SK-N-SH (cell line): ENCODE measurements at regions of chr5 and their contacts with region 1.

Region 1: DNA sequence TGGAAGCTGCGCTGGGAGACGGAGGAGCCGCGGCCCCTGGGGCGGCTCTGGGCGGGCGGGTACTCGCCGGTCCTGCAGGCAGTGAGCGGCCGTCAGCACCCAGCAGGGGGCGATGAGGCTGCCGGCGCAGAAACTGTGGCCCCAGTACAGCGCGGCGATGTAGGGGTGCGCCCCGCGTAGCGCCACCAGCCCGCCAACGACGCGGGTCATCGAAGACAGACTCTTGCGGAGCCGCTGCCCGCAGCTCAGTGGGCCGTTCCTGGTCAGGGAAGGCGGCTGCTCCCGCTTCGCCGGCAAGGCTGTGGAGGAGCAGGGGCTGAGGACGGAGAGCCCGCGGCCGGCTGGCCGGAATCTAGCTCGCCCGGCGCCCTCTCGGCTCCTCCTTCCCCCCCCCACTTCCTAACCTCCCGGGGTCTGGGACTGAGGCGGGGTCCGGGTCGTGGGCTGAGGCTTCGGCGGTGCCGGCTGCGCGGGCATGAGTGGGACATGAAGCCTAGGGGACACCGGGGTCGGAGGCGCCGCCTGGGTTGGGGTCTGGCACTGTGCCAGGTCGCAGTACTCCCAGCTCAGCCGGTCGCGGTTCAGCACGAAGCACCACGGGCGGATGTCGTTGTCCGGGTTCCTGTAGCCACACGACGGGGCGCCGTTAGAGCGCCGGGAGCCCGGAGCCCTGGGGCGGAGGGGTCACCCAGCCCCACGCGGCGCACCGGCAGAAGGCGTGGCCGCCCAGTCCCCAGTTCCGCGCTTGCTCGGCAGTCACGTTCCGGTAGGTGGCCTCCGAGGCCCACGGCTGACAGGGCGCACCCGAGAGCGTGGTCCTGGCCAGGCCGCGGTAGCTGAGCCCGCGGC is 3.6 kb upstream of the PFN3 start:
- DNase-seq: peak; percentile 94
- H3K4me3 ChIP-seq: peak overlapping the region; percentile 60 to 83
- H3K27ac ChIP-seq: peak overlapping the region in 1 of 2 experiments; percentile 96; a peak in 2 of 4 replicates
- H3K4me1 ChIP-seq: peaks cover 0 to 28% of the 10 kb centered on the region in 2 experiments; a peak in 1 of 4 replicates
- H3K27me3 ChIP-seq: no peaks in the 10 kb centered on the region
- CTCF ChIP-seq: peak; percentile 72
- EP300 ChIP-seq: no peak; a peak in 1 of 4 replicates
- RAD21 ChIP-seq: peak; percentile 81

Region 2: DNA sequence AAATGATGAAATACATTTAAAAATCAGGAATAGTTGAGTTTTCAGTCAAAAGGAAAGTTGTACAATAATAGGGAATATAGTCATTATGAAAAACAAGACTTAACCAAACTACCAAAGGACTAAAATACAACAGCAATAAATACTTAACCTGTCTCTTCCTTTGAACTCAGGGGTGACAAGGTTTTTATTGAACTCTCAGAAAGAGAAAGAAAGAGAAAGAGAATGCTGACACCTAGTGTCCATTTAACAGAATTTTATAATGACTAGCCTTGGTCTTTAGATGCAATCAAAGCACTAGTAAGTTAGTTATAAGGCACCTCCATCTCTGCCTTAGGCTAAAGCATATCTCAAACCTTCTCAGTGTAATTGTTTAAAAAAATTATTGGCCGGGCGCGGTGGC is 445.0 kb before region 1 on chr5:
- CTCF ChIA-PET with region 1: no interaction called
- POLR2A ChIA-PET with region 1: no interaction called
- DNase-seq: peak; percentile 54
- H3K4me3 ChIP-seq: no peak overlapping the region; a peak in 1 of 4 replicates
- H3K27ac ChIP-seq: no peak overlapping the region
- H3K4me1 ChIP-seq: peaks cover 7 to 8% of the 10 kb centered on the region in 2 experiments; a peak in 3 of 4 replicates
- H3K27me3 ChIP-seq: no peaks in the 10 kb centered on the region
- CTCF ChIP-seq: peak; percentile 64
- EP300 ChIP-seq: no peak
- RAD21 ChIP-seq: peak; percentile 80

Region 3: DNA sequence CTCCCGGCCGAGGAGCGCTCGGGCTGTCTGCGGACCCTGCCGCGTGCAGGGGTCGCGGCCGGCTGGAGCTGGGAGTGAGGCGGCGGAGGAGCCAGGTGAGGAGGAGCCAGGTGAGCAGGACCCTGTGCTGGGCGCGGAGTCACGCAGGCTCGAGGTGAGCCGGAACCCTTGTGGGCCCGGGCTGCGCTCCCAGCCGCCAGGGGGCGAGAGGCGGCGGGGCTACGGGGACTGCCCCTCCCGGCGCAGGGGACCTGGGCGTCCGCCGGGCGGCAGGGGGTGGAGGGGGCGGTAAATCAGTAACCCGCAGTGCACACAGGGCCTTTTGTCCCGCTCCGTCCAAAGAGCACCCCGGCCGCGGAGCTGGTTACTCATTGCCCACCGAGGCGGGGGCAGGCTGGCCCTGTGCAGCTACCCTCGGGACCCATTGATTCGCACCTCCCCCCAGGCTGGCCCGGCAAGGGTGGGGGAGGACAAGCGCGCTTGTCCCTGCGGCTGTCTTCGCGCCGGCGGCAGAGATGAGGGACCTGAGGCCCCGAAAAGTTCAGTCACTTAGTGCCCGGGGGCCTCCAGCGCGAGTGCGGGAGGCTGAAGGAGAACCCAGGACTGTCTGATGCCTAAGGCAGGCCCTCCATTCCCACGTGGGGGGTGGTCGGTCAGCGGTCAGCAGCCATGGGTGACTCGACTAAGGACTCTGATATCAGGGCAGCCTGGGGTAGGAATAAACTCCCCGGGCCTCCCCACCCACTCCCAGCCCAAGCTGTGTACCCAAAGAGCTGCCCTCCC is 316.9 kb before region 1 on chr5:
- CTCF ChIA-PET with region 1: no interaction called
- POLR2A ChIA-PET with region 1: no interaction called
- DNase-seq: peak; percentile 88
- H3K4me3 ChIP-seq: peak overlapping the region; percentile 39 to 47; a peak in 3 of 4 replicates
- H3K27ac ChIP-seq: no peak overlapping the region
- H3K4me1 ChIP-seq: peaks cover 0 to 9% of the 10 kb centered on the region in 2 experiments; a peak in 1 of 4 replicates
- H3K27me3 ChIP-seq: no peaks in the 10 kb centered on the region
- CTCF ChIP-seq: peak; percentile 58
- EP300 ChIP-seq: no peak
- RAD21 ChIP-seq: no peak

Region 4: GRCh38 chr5:177317959-177318377 is 86.0 kb before region 1 on chr5:
- CTCF ChIA-PET with region 1: interaction called, 18 read pairs
- POLR2A ChIA-PET with region 1: no interaction called
- DNase-seq: peak; percentile 73
- H3K4me3 ChIP-seq: peak overlapping the region in 1 of 2 experiments; percentile 24; a peak in 1 of 4 replicates
- H3K27ac ChIP-seq: no peak overlapping the region
- H3K4me1 ChIP-seq: peaks cover 0 to under 1% of the 10 kb centered on the region in 2 experiments; a peak in 1 of 4 replicates
- H3K27me3 ChIP-seq: no peaks in the 10 kb centered on the region
- CTCF ChIP-seq: peak; percentile 88
- EP300 ChIP-seq: no peak
- RAD21 ChIP-seq: peak; percentile 78

Region 5: GRCh38 chr5:177382423-177383029 is 21.5 kb before region 1 on chr5:
- CTCF ChIA-PET with region 1: interaction called, 209 read pairs
- POLR2A ChIA-PET with region 1: no interaction called
- DNase-seq: peak; percentile 56
- H3K4me3 ChIP-seq: no peak overlapping the region
- H3K27ac ChIP-seq: no peak overlapping the region
- H3K4me1 ChIP-seq: peaks cover 0 to 7% of the 10 kb centered on the region in 2 experiments; a peak in 2 of 4 replicates
- H3K27me3 ChIP-seq: no peaks in the 10 kb centered on the region
- CTCF ChIP-seq: peak; percentile 27
- EP300 ChIP-seq: no peak
- RAD21 ChIP-seq: peak; percentile 38

Region 6: GRCh38 chr5:177431317-177432142 is 27.5 kb after region 1 on chr5:
- CTCF ChIA-PET with region 1: interaction called, 120 read pairs
- POLR2A ChIA-PET with region 1: interaction called, 11 read pairs
- DNase-seq: no peak
- H3K4me3 ChIP-seq: no peak overlapping the region
- H3K27ac ChIP-seq: no peak overlapping the region; a peak in 1 of 4 replicates
- H3K4me1 ChIP-seq: peaks cover 0 to 26% of the 10 kb centered on the region in 2 experiments; a peak in 1 of 4 replicates
- H3K27me3 ChIP-seq: no peaks in the 10 kb centered on the region
- CTCF ChIP-seq: no peak
- EP300 ChIP-seq: no peak
- RAD21 ChIP-seq: no peak

Region 7: DNA sequence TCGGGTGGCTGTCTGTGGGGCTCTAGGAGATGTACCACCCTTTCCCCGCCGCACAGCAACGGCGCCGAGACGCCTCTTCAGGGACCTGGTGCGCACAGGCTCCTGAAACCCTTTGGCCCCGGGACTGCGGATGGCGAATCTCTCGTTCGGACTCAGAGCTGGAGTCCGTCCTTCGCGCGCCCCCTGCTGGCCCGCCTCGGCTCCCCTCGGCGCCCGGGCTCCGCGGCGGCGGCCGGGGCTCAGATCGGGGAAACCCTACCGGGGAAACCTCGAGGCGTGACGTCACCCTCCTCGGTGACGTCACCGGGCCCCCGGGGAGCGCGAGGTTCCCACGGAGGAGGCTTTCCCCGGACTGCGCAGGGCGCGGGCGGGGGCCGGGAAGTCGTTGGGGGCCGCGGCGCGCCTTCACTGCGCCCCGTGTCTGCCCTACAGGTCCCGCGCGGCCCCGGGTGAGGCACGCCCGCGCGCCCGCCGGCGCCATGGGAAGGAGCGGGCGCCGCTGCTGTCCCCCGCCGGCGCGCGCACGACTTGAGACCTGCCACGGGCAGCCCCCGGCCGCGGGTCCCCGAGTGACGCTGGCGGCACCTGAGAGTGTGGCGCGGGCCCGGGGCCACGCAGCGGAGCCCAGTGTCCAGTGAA is 50.5 kb after region 1 on chr5:
- CTCF ChIA-PET with region 1: interaction called, 375 read pairs
- POLR2A ChIA-PET with region 1: interaction called, 72 read pairs
- DNase-seq: peak; percentile 95
- H3K4me3 ChIP-seq: peak overlapping the region; percentile 47 to 48
- H3K27ac ChIP-seq: peak overlapping the region; percentile 61 to 91
- H3K4me1 ChIP-seq: peaks cover 13 to 85% of the 10 kb centered on the region in 2 experiments
- H3K27me3 ChIP-seq: no peaks in the 10 kb centered on the region
- CTCF ChIP-seq: peak; percentile 77
- EP300 ChIP-seq: no peak
- RAD21 ChIP-seq: peak; percentile 86

Region 8: DNA sequence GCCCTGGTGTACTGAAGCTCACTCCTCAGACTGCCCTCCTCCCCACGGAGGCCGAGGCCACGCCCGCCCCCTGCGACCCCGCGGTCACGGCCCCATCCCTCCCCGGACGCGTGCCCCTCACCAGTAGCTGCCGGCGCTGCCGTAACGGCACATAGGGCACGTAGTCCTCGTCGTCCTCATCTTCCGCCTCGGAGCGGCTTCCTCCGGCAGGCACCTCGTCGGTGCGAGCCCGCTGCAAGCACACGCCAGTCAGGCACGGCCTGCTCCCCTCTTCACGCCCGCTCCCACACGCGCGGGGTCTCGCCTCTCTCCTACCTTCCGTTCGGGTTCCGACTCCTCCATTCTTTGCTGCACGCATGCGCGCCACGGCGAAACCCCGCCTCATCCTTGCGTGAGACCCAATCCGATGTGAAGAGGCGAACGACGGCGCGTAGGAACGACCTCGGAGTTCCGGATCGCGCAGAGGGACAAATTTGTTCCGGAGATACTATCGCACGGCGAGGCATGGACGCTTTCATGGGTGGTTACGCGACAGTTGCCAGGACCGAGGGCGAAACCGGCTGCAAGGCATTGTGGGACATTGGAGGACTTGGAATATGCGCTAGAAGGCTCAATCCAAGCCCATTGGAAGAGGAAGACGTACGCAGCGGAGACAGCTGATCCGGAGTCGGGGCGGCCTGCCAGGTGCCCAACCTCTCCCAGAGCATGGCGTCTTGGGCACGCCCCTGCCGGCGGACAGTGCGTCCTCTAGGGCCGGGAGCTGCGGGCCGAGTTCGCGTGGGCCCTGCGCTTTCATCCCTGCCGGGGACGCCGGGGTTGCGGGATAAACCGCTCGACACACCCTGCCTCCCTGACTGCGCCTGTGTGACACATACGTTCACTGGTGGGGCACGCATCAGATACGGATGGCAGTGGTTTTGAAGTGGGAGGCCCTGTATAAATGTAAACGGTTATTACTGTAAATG is 112.9 kb after region 1 on chr5 and contains the start of gene DDX41:
- CTCF ChIA-PET with region 1: interaction called, 11 read pairs
- POLR2A ChIA-PET with region 1: no interaction called
- DNase-seq: peak; percentile 98
- H3K4me3 ChIP-seq: peak within 1 kb of the TSS; percentile 79 to 99
- H3K27ac ChIP-seq: peak within 1 kb of the TSS; percentile 72 to 91
- H3K4me1 ChIP-seq: peaks cover 6 to 15% of the 10 kb centered on the region in 2 experiments; a peak in 2 of 4 replicates
- H3K27me3 ChIP-seq: no peaks in the 10 kb centered on the region
- CTCF ChIP-seq: 0 out of 2 replicates have a peak, but pooled peaks have one; percentile 20
- EP300 ChIP-seq: no peak; a peak in 2 of 4 replicates
- RAD21 ChIP-seq: no peak
- polyA plus RNA-seq, gene DDX41: 158 and 176 TPM in 2 replicates